ENCODE measurements at regions of chr14 and their contacts with region 1.

Region 1: GRCh38 chr14:102316743-102317563 is 2.6 kb upstream of the ZNF839 start:
- DNase-seq: peak; percentile 97

Region 2: GRCh38 chr14:101707068-101707842 is 609.7 kb before region 1 on chr14:
- intact Hi-C with region 1: loop called (anchors 5 kb)
- DNase-seq: no peak

Region 3: DNA sequence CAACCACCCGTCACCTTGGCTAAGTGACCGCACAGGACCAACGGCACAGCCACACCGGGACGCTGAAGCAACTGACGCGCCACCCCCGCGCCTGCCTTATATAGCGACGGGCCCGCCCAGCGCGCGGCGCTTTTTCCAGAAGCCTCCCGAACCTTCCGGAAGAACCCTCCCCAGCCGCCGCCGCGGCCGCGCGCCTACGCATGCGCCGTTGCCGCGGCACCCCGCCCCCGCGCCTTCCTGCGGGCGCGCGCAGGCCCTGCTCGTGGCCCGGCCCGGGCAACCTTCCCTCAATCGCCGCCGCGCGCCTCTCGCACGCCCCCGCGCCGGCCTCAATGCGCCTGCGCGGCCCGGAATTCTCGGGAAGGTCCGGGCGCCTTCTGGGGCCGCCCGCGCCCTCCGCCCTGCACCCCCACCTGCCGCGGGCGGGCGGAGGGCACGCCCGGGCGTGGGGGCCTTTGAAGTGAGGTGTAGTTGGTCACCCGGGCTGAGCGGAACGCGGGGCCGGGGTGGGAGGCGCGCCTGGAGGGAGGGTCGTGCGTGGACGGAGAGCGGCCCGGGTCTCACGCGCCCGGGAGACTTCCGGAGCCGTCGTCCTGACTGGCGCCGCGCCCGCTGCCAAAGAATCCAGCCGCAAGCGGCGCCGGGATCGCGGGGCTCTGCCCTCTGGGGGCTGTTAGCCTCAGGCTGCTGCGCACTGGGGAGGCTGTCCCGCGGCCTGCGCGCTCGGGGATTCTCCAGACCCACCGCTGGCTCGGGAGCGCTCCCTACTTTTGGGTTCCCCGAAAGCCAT is 229.8 kb before region 1 on chr14 and contains the start of gene HSP90AA1:
- intact Hi-C with region 1: loop called (anchors 5 kb)
- DNase-seq: peak; percentile 97
- total RNA-seq, gene HSP90AA1: 475 TPM

Region 4: GRCh38 chr14:102235275-102235897 is 81.6 kb before region 1 on chr14:
- intact Hi-C with region 1: loop called (anchors 1 kb)
- DNase-seq: peak; percentile 90

Region 5: GRCh38 chr14:102362545-102363181 is 45.7 kb after region 1 on chr14 and contains the starts of genes CINP and TECPR2:
- intact Hi-C with region 1: loop called (anchors 5 kb)
- DNase-seq: peak; percentile 100
- total RNA-seq, gene CINP: 24.5 TPM
- total RNA-seq, gene TECPR2: 28.0 TPM

Measured in cardiac septum (tissue), 1 donor.